ENCODE measurements at regions of chr20 and their contacts with region 1.

Region 1: GRCh38 chr20:47272893-47273590 is 83.5 kb downstream of the ZMYND8 start:
- DNase-seq: peak; percentile 20
- H3K4me3 ChIP-seq: no peak overlapping the region
- H3K27ac ChIP-seq: peak overlapping the region; percentile 42
- H3K27me3 ChIP-seq: no peaks in the 10 kb centered on the region
- CTCF ChIP-seq: peak; percentile 87

Region 2: DNA sequence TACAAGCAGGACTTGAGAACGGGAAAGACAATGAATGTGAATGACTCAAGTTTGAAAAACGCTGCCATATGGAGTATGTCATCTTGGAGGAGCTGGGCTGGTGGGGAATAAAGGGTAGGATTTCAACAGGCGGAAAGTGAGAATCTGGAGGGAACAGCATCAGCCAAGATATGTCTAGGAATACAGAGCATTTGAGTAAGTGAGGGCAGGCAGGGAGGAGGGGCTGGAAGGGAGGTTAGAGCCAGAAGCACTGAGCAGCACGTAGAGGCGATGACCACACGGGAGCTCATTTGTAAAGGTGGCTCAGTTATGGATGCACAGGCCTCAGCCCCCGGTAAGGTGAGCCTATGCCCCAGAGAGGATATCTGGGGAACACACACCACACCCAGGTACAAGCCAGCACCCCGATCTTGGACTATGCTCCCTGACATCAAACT is 31.7 kb before region 1 on chr20:
- CTCF ChIA-PET with region 1: interaction called, 37 read pairs
- POLR2A ChIA-PET with region 1: interaction called, 8 read pairs
- DNase-seq: peak; percentile 97
- H3K4me3 ChIP-seq: no peak overlapping the region
- H3K27ac ChIP-seq: peak overlapping the region; percentile 84
- H3K27me3 ChIP-seq: no peaks in the 10 kb centered on the region
- CTCF ChIP-seq: no peak

Region 3: DNA sequence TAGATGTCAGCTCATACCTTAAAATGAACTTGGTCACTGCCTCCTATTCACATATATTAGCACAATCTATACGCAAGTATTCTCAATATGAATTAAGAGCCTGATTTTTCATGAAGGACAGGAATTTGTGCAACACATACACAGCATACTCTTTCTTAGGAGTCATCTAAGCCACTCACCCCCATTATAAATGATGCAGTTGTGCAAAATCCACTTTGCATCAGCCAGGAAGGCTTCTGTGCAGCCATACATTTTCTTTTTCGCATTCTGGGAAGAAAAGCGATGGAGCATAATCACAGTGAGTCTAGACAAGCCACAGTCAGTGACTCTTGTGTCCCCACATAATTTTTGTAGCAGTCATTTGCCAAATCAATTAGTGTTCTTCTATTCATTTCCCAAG is 17.0 kb after region 1 on chr20:
- CTCF ChIA-PET with region 1: interaction called, 32 read pairs
- POLR2A ChIA-PET with region 1: no interaction called
- DNase-seq: no peak
- H3K4me3 ChIP-seq: no peak overlapping the region
- H3K27ac ChIP-seq: no peak overlapping the region
- H3K27me3 ChIP-seq: no peaks in the 10 kb centered on the region
- CTCF ChIP-seq: no peak

Region 4: GRCh38 chr20:47356526-47357295 is 83.7 kb after region 1 on chr20 and contains the start of gene ZMYND8:
- CTCF ChIA-PET with region 1: interaction called, 28 read pairs
- POLR2A ChIA-PET with region 1: interaction called, 5 read pairs
- DNase-seq: peak; percentile 81
- H3K4me3 ChIP-seq: peak within 1 kb of the TSS; percentile 52
- H3K27ac ChIP-seq: peak within 1 kb of the TSS; percentile 99
- H3K27me3 ChIP-seq: no peaks in the 10 kb centered on the region
- CTCF ChIP-seq: no peak
- polyA plus RNA-seq, gene ZMYND8: 20.3 and 23.1 TPM in 2 replicates

Region 5: DNA sequence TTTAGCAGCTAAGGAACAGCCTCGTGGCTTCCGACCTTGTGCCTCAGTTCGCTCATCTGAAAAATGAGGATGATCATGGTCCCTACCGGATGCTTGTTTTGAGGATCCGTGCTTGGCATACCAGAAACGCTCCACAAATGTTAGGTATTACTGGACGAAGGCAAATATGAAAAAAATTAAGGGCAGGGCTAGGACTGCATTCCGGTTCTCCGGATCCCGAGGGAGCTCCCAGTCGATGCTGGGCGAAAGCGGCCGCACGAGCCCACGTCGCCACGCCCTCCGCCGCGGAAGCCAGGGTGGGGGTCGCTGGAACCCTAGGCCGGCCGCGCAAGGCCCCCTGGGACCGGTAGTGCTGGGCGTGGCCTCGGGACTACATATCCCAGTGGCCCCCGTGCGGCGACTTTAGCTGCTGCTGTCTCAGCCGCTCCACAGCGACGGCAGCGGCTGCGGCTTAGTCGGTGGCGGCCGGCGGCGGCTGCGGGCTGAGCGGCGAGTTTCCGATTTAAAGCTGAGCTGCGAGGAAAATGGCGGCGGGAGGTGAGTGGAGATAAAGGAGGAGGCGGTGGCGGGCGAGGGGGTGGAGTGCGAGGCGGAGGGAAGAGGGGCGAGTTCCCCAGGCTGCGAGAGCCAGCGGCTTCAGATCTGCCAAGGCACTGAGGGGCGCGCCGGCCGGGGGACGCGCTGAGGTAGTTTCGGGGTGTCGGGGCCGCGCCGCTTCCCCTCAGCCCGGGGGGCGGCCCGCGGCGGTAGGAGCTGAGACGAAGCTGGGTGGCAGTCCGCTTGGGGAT is 228.6 kb after region 1 on chr20 and contains the start of gene NCOA3:
- CTCF ChIA-PET with region 1: interaction called, 6 read pairs
- POLR2A ChIA-PET with region 1: interaction called, 10 read pairs
- DNase-seq: peak; percentile 83
- H3K4me3 ChIP-seq: peak within 1 kb of the TSS; percentile 78
- H3K27ac ChIP-seq: peak within 1 kb of the TSS; percentile 55
- H3K27me3 ChIP-seq: no peaks in the 10 kb centered on the region
- CTCF ChIP-seq: peak; percentile 46
- polyA plus RNA-seq, gene NCOA3: 22.1 and 25.4 TPM in 2 replicates

Measured in AG04450 (cell line).